Activated CD8-positive, alpha-beta T cell treated with anti-CD3 and anti-CD28 coated beads for 36 hours (primary cell): ENCODE measurements at regions of chr2 and their contacts with region 1.

Region 1: DNA sequence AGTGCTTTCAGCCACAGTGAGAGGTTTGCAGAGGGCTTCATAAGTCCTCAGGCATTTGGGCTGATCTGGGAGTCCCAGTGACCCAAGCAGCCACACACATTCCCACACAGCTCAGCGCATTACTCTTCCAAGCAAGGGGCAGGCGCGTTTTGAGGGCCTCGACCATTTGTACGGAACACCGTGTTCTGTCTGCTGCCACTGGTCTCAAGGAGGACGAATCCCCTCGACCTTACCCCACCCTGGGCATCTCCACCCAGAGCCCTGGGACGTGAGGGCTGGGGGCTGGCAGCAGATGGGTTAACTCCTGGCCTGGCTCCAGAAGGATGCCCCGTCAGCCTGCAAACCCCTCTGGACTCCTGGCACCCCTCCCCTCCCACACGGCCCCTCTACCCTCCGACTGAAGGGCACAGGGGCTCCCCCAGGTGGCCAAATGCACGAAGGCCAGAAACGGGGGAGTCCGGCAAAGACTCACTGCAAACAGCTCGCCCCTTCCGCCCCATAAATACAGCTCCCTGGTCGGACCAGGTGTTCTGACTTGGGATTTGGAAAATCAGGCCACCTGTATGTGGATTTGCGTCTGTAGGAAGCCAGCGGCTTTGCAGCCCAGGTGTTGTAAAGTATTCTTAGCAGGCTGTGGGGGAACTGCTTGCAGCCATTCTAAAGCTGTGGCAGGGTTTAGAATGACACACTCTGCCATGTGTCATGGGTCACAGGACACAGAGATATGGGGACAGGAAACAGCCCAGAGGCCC is 33.6 kb upstream of the PTMA start:
- DNase-seq: peak; percentile 77
- ATAC-seq: peak; percentile 85
- H3K4me3 Mint-ChIP-seq: peak overlapping the region; percentile 16
- H3K27ac Mint-ChIP-seq: no peak overlapping the region
- H3K4me1 Mint-ChIP-seq: peaks cover 12% of the 10 kb centered on the region
- H3K27me3 Mint-ChIP-seq: no peaks in the 10 kb centered on the region
- CTCF ChIP-seq: peak; percentile 92

Region 2: DNA sequence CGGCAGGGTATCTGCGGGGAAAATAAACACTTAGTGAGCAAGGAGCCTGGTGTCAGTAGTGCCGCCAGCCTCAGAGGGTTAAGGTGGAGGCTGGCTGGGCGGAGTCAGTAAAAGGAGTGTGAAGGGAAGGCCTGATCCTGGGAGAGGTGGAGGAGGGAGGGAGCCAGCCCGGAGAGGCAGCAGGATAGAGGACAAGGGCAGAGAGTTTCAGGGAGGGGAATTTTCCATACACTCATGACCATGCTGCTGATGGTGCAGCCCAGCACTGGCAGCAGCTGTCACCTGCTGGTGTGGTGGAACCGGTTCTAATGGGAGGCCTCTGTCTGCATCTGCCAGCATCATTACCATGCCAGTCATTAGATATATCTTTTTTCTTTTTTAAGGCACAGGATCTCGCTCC is 84.1 kb before region 1 on chr2:
- CTCF ChIA-PET with region 1: no interaction called
- POLR2A ChIA-PET with region 1: no interaction called
- intact Hi-C with region 1: no loop called
- DNase-seq: no peak
- ATAC-seq: no peak
- H3K4me3 Mint-ChIP-seq: no peak overlapping the region
- H3K27ac Mint-ChIP-seq: no peak overlapping the region
- H3K4me1 Mint-ChIP-seq: no peaks in the 10 kb centered on the region
- H3K27me3 Mint-ChIP-seq: no peaks in the 10 kb centered on the region
- CTCF ChIP-seq: no peak

Region 3: DNA sequence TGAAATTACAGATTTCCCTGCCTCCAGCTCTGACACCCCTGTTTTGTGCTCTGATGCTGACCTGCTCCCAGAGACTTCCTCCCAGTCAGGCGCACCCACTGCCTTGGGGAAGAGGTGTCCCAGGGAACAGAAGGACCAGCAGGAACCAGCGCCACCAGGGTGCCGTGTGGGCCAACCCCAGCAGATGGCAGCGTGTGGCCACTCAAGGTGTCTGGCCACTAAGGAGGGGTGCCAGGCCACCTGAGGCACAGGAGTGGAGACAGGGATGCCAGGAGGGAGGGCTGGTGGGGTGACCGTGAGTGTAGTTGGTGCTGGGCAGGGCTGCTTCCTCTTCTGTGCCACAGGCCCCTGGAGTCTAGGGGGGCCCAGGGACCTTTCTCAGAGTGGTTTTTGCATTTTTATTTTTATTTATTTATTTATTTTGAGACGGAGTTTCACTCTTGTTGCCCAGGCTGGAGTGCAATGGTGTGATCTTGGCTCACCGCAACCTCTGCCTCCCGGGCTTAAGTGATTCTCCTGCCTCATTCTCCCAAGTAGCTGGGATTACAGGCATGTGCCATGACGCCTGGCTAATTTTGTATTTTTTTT is 26.1 kb before region 1 on chr2:
- CTCF ChIA-PET with region 1: interaction called, 84 read pairs
- POLR2A ChIA-PET with region 1: no interaction called
- intact Hi-C with region 1: no loop called
- DNase-seq: peak; percentile 81
- ATAC-seq: peak; percentile 99
- H3K4me3 Mint-ChIP-seq: no peak overlapping the region
- H3K27ac Mint-ChIP-seq: no peak overlapping the region
- H3K4me1 Mint-ChIP-seq: peaks cover 2% of the 10 kb centered on the region
- H3K27me3 Mint-ChIP-seq: no peaks in the 10 kb centered on the region
- CTCF ChIP-seq: peak; percentile 73

Region 4: DNA sequence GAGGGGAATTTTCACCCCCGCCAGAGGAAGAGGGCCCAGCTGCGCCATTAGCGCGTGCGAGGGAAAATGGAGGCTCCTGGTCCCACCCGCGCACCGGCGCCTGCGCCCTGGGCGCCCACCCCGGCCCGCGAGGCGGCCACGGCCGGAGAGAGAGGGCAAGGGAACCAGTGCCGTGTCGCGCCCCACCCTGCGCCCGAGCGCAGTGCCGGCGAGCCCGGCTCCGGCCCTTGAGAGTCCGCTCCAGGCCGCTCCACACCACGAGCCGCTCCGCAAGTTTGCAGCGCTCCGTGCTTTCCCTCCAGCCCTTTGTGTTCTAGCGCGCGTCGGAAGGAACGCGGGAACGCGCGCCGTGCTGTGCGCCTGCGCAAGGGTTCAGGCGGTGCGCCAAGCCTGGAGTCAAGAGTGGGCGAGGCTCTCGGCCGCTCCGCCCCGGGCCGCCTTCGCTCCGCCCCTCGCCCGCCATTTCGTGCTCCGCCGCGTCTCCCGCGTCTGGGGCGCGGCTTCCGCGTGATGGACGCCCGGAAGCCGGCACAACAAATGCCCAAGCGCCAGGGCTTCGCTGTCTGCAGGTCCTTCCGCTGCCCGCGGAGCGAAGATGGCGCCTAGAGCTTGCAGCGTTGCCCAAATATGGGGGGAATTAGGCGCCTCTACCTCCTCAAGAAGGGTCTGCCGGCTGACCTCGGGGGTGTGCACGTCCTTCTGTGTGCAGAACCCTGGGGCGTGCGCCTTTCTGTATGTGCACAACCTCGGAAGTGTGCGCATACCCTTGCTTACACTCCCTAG is 12.5 kb before region 1 on chr2:
- CTCF ChIA-PET with region 1: interaction called, 83 read pairs
- POLR2A ChIA-PET with region 1: interaction called, 6 read pairs
- intact Hi-C with region 1: no loop called
- DNase-seq: peak; percentile 96
- ATAC-seq: peak; percentile 93
- H3K4me3 Mint-ChIP-seq: peak overlapping the region; percentile 70
- H3K27ac Mint-ChIP-seq: peak overlapping the region; percentile 95
- H3K4me1 Mint-ChIP-seq: peaks cover 27% of the 10 kb centered on the region
- H3K27me3 Mint-ChIP-seq: no peaks in the 10 kb centered on the region
- CTCF ChIP-seq: no peak

Region 5: GRCh38 chr2:231687133-231687852 is 12.5 kb after region 1 on chr2:
- CTCF ChIA-PET with region 1: interaction called, 57 read pairs
- POLR2A ChIA-PET with region 1: interaction called, 4 read pairs
- intact Hi-C with region 1: no loop called
- DNase-seq: peak; percentile 79
- ATAC-seq: peak; percentile 93
- H3K4me3 Mint-ChIP-seq: peak overlapping the region; percentile 1
- H3K27ac Mint-ChIP-seq: no peak overlapping the region
- H3K4me1 Mint-ChIP-seq: peaks cover 8% of the 10 kb centered on the region
- H3K27me3 Mint-ChIP-seq: peaks cover 7% of the 10 kb centered on the region
- CTCF ChIP-seq: peak; percentile 71

Region 6: DNA sequence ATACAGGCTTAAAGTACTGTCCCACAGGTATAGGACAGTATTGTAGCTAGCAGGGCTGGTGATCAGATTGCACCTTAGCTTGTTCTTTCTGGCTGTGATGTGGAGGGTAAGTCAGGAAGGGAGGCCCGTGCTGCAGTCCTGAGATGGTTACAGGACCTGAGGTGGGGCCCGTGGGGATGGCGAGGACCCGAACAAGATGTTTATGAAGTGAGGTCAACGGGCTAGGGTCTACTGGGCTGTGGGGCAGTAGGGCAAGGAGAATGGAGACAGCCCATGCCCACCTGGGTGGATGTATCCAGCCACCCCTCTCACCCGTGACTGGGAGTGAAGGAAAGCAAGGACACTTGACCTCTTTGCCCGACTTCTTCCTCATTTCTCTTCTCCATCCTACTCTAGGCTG is 51.5 kb after region 1 on chr2:
- CTCF ChIA-PET with region 1: interaction called, 18 read pairs
- POLR2A ChIA-PET with region 1: no interaction called
- intact Hi-C with region 1: no loop called
- DNase-seq: no peak
- ATAC-seq: no peak
- H3K4me3 Mint-ChIP-seq: no peak overlapping the region
- H3K27ac Mint-ChIP-seq: no peak overlapping the region
- H3K4me1 Mint-ChIP-seq: no peaks in the 10 kb centered on the region
- H3K27me3 Mint-ChIP-seq: no peaks in the 10 kb centered on the region
- CTCF ChIP-seq: no peak